SK-N-SH (cell line): ENCODE measurements at regions of chr2 and their contacts with region 1.

Region 1: DNA sequence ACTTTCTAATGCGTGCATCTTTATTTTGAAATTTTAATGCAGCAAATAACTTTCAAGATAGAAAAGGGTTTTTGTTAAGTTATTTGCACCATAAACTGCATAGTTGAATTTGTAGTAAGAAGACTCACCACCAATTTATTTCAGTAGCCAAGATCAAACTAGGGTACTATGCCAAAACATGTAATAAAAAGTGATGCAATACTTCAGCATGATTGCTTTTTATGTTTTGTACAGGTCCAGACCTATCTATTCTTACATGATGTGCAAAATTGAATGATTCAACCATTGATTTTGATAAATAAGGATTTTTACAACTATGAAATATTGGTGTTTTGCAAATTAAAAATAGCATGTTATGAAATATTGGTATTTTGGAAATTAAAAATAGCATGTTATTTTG is 26.7 kb downstream of the AGPS start:
- DNase-seq: no peak
- H3K4me3 ChIP-seq: no peak overlapping the region
- H3K27ac ChIP-seq: no peak overlapping the region
- H3K4me1 ChIP-seq: peaks cover 0 to 22% of the 10 kb centered on the region in 2 experiments; a peak in 2 of 4 replicates
- H3K27me3 ChIP-seq: no peaks in the 10 kb centered on the region
- CTCF ChIP-seq: no peak
- EP300 ChIP-seq: no peak
- RAD21 ChIP-seq: no peak

Region 2: GRCh38 chr2:176997074-176997791 is 422.0 kb before region 1 on chr2:
- CTCF ChIA-PET with region 1: no interaction called
- POLR2A ChIA-PET with region 1: no interaction called
- DNase-seq: no peak
- H3K4me3 ChIP-seq: no peak overlapping the region
- H3K27ac ChIP-seq: peak overlapping the region in 1 of 2 experiments; percentile 71; a peak in 2 of 4 replicates
- H3K4me1 ChIP-seq: no peaks in the 10 kb centered on the region
- H3K27me3 ChIP-seq: no peaks in the 10 kb centered on the region
- CTCF ChIP-seq: no peak
- EP300 ChIP-seq: 0 out of 4 replicates have a peak, but pooled peaks of 1 of the 2 experiments have one; percentile 24
- RAD21 ChIP-seq: no peak

Region 3: GRCh38 chr2:177021706-177022343 is 397.4 kb before region 1 on chr2:
- CTCF ChIA-PET with region 1: no interaction called
- POLR2A ChIA-PET with region 1: no interaction called
- DNase-seq: no peak
- H3K4me3 ChIP-seq: no peak overlapping the region
- H3K27ac ChIP-seq: no peak overlapping the region
- H3K4me1 ChIP-seq: peaks cover 0 to 6% of the 10 kb centered on the region in 2 experiments; a peak in 1 of 4 replicates
- H3K27me3 ChIP-seq: peaks cover 5% of the 10 kb centered on the region; the same call in 1 of the 2 replicates
- CTCF ChIP-seq: no peak
- EP300 ChIP-seq: no peak
- RAD21 ChIP-seq: no peak

Region 4: DNA sequence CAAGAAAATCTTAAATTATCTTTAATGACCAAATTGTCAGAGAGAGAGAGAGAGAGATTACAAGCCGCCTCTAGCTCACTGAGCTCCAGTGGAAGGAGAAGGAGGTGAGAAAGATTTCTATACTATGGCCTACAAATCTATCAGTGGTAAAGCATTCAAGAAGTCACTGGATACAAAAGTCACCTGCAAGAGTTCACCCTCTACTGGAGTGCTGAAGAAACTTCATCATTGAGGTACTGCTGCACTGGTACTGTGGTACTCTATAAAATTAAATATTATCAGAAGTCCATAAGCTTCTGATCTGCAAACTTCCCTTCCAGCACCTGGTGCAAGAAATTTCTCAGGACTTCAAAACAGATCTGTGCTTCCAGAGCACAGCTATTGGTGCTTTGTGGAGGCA is 75.0 kb before region 1 on chr2:
- CTCF ChIA-PET with region 1: interaction called, 68 read pairs
- POLR2A ChIA-PET with region 1: no interaction called
- DNase-seq: no peak
- H3K4me3 ChIP-seq: no peak overlapping the region
- H3K27ac ChIP-seq: no peak overlapping the region
- H3K4me1 ChIP-seq: peaks cover 0 to 4% of the 10 kb centered on the region in 2 experiments; a peak in 1 of 4 replicates
- H3K27me3 ChIP-seq: no peaks in the 10 kb centered on the region
- CTCF ChIP-seq: no peak
- EP300 ChIP-seq: no peak
- RAD21 ChIP-seq: no peak

Region 5: GRCh38 chr2:177429688-177430325 is 10.5 kb after region 1 on chr2:
- CTCF ChIA-PET with region 1: interaction called, 11 read pairs
- POLR2A ChIA-PET with region 1: no interaction called
- DNase-seq: no peak
- H3K4me3 ChIP-seq: no peak overlapping the region; a peak in 1 of 4 replicates
- H3K27ac ChIP-seq: peak overlapping the region in 1 of 2 experiments; percentile 22; a peak in 2 of 4 replicates
- H3K4me1 ChIP-seq: 0 out of 4 replicates have a peak, but pooled peaks cover 0 to 5% of the 10 kb centered on the region in 2 experiments
- H3K27me3 ChIP-seq: no peaks in the 10 kb centered on the region
- CTCF ChIP-seq: no peak
- EP300 ChIP-seq: no peak
- RAD21 ChIP-seq: no peak